SK-N-SH (cell line): ENCODE measurements at regions of chr22 and their contacts with region 1.

Region 1: DNA sequence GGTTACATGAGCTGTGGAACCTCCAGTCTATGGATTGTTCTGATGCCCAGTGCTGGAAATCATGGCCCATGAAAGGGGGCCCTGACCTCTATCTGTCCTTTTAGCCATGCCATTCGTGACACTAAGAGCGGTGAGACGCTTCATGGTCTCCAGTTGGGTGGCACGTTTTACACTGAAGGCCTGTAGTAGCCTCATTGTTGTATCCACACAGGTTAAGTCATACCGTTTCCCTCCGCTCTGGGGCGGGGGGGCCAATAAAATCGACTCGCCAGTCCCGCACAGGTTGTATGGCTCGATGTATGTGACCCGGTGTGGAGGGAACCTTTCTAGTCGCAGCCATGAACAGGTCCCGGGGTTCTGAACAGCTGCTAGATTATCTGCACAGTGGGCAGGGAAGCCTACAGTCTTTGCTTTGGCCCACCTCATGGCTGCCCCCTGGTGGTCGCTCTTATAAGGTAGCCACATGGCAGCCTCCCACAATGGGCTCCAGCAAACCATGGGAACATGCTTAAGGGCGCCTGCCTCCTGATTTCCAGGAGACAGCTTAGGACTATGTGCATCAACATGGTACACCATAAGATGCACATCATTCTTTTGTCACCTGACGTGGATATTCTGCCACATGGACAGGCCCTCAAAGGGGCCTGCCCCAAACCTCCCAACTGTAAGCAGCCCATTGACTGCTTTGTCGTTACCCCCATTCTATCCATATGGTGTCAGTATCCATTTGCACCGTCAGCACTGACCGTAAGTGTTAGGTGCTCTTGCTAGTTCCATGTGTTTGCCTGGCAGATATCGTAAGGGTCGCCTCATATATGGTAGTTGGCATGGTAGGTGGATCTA is 19.7 kb upstream of the APOL3 start:
- DNase-seq: peak; percentile 67
- H3K4me3 ChIP-seq: no peak overlapping the region
- H3K27ac ChIP-seq: no peak overlapping the region
- H3K4me1 ChIP-seq: peaks cover 3 to 6% of the 10 kb centered on the region in 2 experiments; a peak in 1 of 4 replicates
- H3K27me3 ChIP-seq: no peaks in the 10 kb centered on the region
- CTCF ChIP-seq: peak; percentile 75
- EP300 ChIP-seq: no peak
- RAD21 ChIP-seq: peak; percentile 60

Region 2: GRCh38 chr22:36144886-36145541 is 35.2 kb before region 1 on chr22:
- CTCF ChIA-PET with region 1: interaction called, 10 read pairs
- POLR2A ChIA-PET with region 1: no interaction called
- DNase-seq: peak; percentile 57
- H3K4me3 ChIP-seq: no peak overlapping the region
- H3K27ac ChIP-seq: no peak overlapping the region
- H3K4me1 ChIP-seq: peaks cover 0 to 8% of the 10 kb centered on the region in 2 experiments; a peak in 1 of 4 replicates
- H3K27me3 ChIP-seq: no peaks in the 10 kb centered on the region
- CTCF ChIP-seq: peak; percentile 82
- EP300 ChIP-seq: no peak
- RAD21 ChIP-seq: peak; percentile 85

Region 3: GRCh38 chr22:36162127-36163034 is 17.9 kb before region 1 on chr22:
- CTCF ChIA-PET with region 1: interaction called, 20 read pairs
- POLR2A ChIA-PET with region 1: no interaction called
- DNase-seq: no peak
- H3K4me3 ChIP-seq: no peak overlapping the region
- H3K27ac ChIP-seq: no peak overlapping the region
- H3K4me1 ChIP-seq: no peaks in the 10 kb centered on the region; a peak in 1 of 4 replicates
- H3K27me3 ChIP-seq: no peaks in the 10 kb centered on the region; the same call in 1 of the 2 replicates
- CTCF ChIP-seq: no peak
- EP300 ChIP-seq: no peak
- RAD21 ChIP-seq: no peak